Stomach (tissue), 19 donors: ENCODE measurements at regions of chr9 and their contacts with region 1.

Region 1: DNA sequence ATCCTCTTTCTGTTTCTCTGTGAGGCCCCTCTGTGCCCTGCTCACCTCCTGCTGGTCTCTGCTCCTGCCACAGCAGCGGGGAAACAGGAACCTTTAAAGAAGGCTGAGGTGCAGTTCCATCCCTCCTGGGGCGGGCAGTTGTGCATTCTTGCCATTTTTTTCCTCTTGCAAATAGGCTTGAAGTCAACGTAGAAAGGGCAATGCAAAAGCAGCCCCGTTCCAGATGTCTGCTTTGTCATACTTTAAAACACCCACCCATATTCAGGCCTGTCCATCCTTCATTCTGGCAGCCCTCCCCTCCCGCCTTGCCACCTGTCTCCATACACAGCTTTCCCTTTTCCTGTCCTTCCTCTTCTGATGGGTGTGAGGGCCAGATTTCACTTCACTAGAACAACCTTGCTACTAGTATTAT is 65.4 kb upstream of the KLF9 start:
- DNase-seq: peak; percentile 25 to 34
- H3K4me3 ChIP-seq: peak overlapping the region in 2 of 4 donors; percentile 7 to 11
- H3K27ac ChIP-seq: peak overlapping the region; percentile 93 to 97 (median 96)
- H3K4me1 ChIP-seq: peaks cover 41 to 95% (median 81%) of the 10 kb centered on the region in 4 donors
- H3K27me3 ChIP-seq: no peaks in the 10 kb centered on the region
- CTCF ChIP-seq: no peak
- EP300 ChIP-seq: no peak
- POLR2A ChIP-seq: no peak

Region 2: GRCh38 chr9:70419546-70420266 is 60.2 kb before region 1 on chr9:
- intact Hi-C with region 1: loop called (anchors 10 kb)
- DNase-seq: peak; percentile 94 to 97
- H3K4me3 ChIP-seq: peak overlapping the region; percentile 27 to 50 (median 46)
- H3K27ac ChIP-seq: peak overlapping the region; percentile 99 to 100 (median 100)
- H3K4me1 ChIP-seq: peaks cover 40 to 67% (median 55%) of the 10 kb centered on the region in 4 donors
- H3K27me3 ChIP-seq: no peaks in the 10 kb centered on the region
- CTCF ChIP-seq: peak in 1 of 7 experiments; percentile 29
- EP300 ChIP-seq: peak; percentile 96
- POLR2A ChIP-seq: peak in 2 of 4 donors; percentile 81 to 85